Uterus (tissue), 4 donors: ENCODE measurements at regions of chr18 and their contacts with region 1.

Region 1: DNA sequence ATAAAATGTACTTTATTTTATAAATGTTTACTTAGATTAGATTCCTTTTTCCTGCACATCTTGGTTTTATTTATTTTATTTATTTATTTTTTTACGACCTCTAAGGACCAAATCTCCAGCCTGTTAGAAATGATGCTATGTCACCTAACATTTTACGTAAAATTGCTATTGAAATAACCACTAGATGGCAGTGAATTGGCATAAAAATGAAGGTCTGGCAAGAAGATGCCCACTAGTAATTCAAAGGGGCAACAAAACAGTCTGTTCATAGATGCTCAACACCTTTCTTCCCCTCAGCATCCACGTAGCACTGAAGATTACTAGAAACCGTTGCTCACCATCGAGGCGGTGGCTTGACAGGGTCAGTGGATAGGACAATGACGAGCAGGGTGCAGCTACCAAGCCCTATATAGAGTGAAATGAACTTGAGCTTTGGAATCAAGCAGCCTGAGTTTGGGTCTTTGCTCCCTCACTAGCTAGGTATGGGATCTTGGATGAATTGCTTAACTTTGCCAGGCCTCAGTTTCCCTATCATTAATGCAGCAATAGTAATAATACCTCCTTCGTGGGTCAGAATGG is 128.7 kb upstream of the L3MBTL4 start:
- DNase-seq: no peak
- H3K4me3 ChIP-seq: no peak overlapping the region
- H3K27ac ChIP-seq: no peak overlapping the region
- H3K4me1 ChIP-seq: no peaks in the 10 kb centered on the region
- H3K27me3 ChIP-seq: no peaks in the 10 kb centered on the region
- CTCF ChIP-seq: peak; percentile 46 to 63 (median 50)
- POLR2A ChIP-seq: no peak

Region 2: GRCh38 chr18:6885992-6886796 is 342.8 kb after region 1 on chr18:
- intact Hi-C with region 1: loop called (anchors 5 kb)
- DNase-seq: peak; percentile 37 to 55
- H3K4me3 ChIP-seq: no peak overlapping the region
- H3K27ac ChIP-seq: peak overlapping the region in 1 of 2 donors; percentile 42
- H3K4me1 ChIP-seq: no peaks in the 10 kb centered on the region
- H3K27me3 ChIP-seq: no peaks in the 10 kb centered on the region
- CTCF ChIP-seq: peak; percentile 69 to 78 (median 70)
- POLR2A ChIP-seq: no peak